ENCODE measurements at regions of chr4 and their contacts with region 1.

Region 1: DNA sequence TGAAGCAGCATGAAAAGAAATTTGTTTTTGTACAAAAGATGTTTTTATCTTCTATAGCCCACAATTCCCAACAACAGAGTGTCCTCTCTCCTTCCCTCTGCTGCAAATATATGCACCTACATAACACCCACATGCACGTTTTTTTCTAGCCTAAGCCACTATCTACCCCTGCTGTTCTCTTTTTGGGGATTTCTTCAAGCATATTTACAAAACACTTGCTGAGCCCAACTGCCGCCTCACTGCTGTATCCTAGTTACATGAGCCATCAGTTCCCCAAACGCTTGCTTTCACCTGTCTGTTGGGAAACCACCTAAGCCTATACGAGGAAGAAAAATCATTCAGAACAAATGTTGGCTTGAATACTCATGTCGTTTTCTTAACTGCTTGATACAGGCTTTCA is 127.2 kb downstream of the CHRNA9 start:
- DNase-seq: peak; percentile 57
- ATAC-seq: peak; percentile 93
- H3K4me3 ChIP-seq: no peak overlapping the region
- H3K27ac ChIP-seq: peak overlapping the region; percentile 61
- H3K4me1 ChIP-seq: peaks cover 27% of the 10 kb centered on the region
- H3K27me3 ChIP-seq: no peaks in the 10 kb centered on the region
- CTCF ChIP-seq: peak in 2 of 3 experiments; percentile 5 to 40; a peak in 3 of 6 replicates
- EP300 ChIP-seq: peak; percentile 48 to 87; a peak in 3 of 4 replicates
- POLR2A ChIP-seq: no peak
- RAD21 ChIP-seq: peak; percentile 51; the same call in 1 of the 2 replicates

Region 2: DNA sequence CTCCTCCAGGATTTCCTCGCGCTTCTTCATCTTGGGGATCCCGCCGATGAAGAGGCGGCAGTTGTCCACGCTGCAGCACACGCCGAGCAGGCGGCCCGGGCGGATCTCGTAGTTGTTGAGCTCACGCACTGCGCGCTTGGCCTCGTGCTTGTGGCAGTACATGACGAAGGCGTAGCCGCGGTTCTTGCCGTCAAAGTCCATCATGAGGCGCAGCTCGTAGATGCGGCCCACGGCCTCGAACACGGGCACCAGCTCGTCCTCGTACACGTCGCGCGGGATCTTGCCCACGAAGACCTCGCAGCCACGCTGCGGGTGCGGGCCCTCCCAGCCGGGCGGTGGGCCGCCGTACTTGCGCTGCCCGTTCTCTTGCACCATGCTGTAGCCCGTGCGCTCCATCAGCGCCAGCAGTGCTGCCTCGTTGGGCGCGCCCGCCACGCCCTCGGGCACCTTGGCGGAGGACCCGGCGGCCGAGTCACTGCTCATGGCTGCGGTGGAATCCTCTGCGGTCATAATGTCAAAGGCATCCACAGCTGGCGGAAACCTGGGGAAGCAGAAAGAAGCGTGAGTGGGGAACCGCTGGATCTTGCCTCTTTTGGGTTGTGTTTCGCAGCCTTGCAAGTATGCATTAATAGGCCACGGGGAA is 23.8 kb before region 1 on chr4:
- CTCF ChIA-PET with region 1: interaction called, 8 read pairs
- POLR2A ChIA-PET with region 1: interaction called, 3 read pairs
- RAD21 ChIA-PET with region 1: interaction called, 15 read pairs
- SMC1A ChIA-PET with region 1: interaction called, 11 read pairs
- in situ Hi-C with region 1: no loop called
- intact Hi-C with region 1: no loop called
- DNase-seq: no peak
- ATAC-seq: no peak
- H3K4me3 ChIP-seq: no peak overlapping the region
- H3K27ac ChIP-seq: no peak overlapping the region
- H3K4me1 ChIP-seq: peaks cover 11% of the 10 kb centered on the region
- H3K27me3 ChIP-seq: no peaks in the 10 kb centered on the region
- CTCF ChIP-seq: no peak
- EP300 ChIP-seq: no peak
- POLR2A ChIP-seq: no peak
- RAD21 ChIP-seq: no peak

Region 3: GRCh38 chr4:40486534-40486933 is 24.2 kb after region 1 on chr4:
- CTCF ChIA-PET with region 1: interaction called, 6 read pairs
- POLR2A ChIA-PET with region 1: no interaction called
- RAD21 ChIA-PET with region 1: no interaction called
- SMC1A ChIA-PET with region 1: interaction called, 11 read pairs
- in situ Hi-C with region 1: no loop called
- intact Hi-C with region 1: no loop called
- DNase-seq: no peak
- ATAC-seq: no peak
- H3K4me3 ChIP-seq: no peak overlapping the region
- H3K27ac ChIP-seq: no peak overlapping the region
- H3K4me1 ChIP-seq: no peaks in the 10 kb centered on the region; the same call in 1 of the 2 replicates
- H3K27me3 ChIP-seq: no peaks in the 10 kb centered on the region
- CTCF ChIP-seq: no peak
- EP300 ChIP-seq: no peak
- POLR2A ChIP-seq: no peak
- RAD21 ChIP-seq: no peak

Measured in GM12878 (cell line).